Activated CD8-positive, alpha-beta T cell treated with anti-CD3 and anti-CD28 coated beads for 36 hours (primary cell): ENCODE measurements at regions of chr19 and their contacts with region 1.

Region 1: DNA sequence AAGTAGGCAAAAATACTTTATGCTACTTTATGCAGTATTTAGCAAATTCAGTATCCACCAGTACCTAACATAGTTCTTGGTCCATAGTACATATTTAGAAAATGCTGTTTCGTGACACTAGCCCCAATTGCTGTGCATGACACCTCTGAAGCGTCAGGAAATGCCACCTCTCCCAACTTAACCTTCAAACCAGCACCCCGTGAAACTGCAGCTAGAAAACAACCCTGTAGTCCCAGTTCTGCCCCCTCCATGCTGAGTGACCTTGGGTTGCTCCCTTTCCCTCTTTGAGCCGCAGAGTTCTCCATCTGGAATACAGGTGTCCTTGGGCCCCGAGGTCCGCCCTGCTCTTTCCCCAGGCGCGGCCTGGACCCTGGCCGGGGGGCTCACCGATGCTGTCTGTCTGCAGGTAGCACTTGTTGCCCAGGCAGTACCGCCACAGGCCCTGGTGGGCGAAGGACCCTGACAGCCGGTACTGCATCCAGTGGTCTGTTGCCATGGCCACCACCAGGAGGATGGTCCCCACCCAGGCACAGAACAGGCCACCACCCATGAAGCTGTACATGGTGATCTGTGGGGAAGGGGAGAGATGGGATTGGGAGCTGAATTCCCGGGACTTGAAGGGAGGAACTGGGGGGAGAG is 773 bp downstream of the LIM2 start:
- DNase-seq: no peak
- ATAC-seq: peak; percentile 27
- H3K4me3 Mint-ChIP-seq: peak overlapping the region; percentile 44
- H3K27ac Mint-ChIP-seq: peak overlapping the region; percentile 57
- H3K4me1 Mint-ChIP-seq: peaks cover 23% of the 10 kb centered on the region
- H3K27me3 Mint-ChIP-seq: no peaks in the 10 kb centered on the region
- CTCF ChIP-seq: no peak

Region 2: DNA sequence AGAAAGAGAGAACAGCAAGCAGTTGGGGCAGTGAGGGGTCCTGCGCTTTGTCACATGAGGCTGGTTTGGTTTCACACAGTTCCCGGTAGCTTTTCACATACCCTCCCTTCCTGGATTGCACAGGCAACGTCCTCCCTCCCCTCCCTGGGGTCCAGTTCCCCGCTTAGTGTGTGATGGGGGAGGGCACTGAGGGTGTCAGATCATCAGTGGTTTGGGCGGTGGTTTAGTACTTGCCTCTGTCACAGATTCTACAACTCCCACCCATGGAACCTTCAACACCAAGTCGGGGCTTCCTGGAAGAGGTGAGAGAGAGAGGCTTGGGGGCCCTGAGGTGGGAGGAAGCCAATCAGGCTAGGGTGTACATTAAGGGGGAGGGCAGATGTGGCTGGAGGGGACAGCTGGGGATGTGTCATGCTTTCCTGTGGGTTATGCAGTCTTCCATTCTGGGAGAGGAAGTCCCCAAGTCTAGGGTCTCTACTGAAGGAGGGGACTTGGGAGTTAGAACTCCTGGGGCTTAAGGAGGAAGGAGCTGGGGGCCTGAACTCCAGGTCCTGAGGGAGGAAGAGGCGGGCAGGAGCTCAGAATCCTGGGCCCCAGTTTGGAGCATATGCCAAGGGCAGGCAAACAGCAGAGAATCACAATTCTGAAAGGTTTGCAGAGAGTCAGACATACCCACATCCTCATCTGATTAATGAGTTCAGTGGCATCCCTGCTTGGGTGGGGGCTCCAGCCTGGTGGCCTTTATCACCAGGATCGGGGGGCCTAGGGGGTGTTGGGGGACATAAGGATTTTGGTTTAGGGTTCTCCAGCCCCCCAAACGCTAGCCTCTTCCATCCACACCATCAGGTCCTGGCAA is 14.1 kb before region 1 on chr19 and contains the start of gene NKG7:
- CTCF ChIA-PET with region 1: interaction called, 4 read pairs
- POLR2A ChIA-PET with region 1: interaction called, 15 read pairs
- intact Hi-C with region 1: no loop called
- DNase-seq: peak; percentile 96
- ATAC-seq: peak; percentile 83
- H3K4me3 Mint-ChIP-seq: peak within 1 kb of the TSS; percentile 98
- H3K27ac Mint-ChIP-seq: peak within 1 kb of the TSS; percentile 94
- H3K4me1 Mint-ChIP-seq: peaks cover 62% of the 10 kb centered on the region
- H3K27me3 Mint-ChIP-seq: no peaks in the 10 kb centered on the region
- CTCF ChIP-seq: no peak
- total RNA-seq, gene NKG7: 258 to 283 TPM